Right ventricle myocardium inferior (tissue), 1 donor: ENCODE measurements at regions of chr2 and their contacts with region 1.

Region 1: DNA sequence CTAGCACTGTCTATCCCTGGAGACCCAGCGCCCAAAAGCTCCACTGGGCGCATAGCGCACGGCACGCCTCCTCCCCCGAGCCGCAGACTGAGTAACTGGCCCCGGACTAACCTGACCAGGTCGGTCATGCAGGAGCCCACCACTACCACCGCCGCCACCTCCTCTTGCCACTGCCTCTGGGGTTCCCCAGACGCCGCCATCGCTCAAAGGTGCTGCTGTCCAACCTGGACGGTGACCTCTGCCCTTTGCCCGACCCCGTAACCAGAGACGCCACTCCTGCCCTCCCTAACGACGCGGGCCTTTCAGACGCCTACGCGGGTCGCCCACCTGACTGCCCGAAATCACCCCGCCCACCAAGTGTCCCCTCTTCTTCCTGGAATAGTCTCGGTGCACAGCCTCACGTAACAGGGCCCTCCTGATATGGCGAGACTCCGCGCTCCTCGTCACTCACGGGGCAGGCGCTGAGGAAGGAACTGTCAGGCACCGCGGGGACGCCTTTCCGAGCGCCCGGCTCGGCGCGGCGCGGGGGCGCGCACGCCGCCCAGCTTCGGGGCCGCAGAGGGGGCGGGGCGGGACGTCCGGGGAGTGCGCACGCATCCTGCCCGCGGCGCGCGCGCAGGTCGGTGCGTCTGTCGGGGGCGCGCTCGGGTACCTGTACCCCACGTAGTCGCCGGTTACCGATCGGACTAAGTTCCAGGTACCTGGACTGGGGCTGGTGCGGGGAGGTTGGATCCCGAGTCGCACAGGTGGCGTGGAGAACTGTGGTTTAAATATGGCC is at the starts of genes BABAM2 and RBKS:
- DNase-seq: peak; percentile 92
- ATAC-seq: peak; percentile 97
- total RNA-seq, gene BABAM2: 53.0 TPM
- total RNA-seq, gene RBKS: 4.0 TPM

Region 2: DNA sequence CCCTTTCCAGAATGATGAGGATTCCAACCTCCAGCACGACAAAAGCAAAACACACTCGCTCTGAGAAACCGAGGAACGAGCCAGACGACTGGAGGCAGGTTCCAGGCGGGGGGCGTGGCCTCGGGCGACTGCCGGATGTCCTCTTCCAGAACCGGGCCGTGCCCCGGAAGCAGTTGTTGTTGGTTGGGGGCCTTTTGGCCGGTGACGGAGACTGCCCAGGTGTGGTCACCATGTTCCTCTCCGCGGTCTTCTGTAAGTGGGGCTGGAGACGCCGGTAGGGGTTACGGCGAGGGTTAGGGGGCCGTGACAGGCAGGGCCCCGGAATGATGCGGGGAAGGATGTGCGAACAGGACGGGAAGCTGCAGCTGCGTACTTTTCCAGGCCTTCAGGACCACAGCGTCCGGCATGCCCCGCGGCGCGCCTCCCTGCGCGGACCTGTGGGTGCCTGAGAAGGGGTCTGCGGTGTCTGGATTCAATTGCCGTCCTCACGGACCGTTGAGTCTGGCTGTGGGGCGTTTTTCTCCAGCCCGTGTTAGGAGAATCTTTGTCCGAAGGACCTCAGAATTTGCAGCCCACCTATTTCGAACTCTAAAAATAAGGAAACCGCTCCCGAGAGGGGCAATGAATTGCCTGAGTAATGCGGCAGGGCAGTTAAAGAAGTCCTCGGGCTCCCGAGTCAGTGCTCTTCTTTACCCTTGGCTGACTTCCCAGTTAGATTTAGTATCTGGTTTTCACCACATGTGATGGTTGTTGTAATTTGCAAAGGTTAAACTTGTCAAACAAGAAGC is 118.6 kb before region 1 on chr2 and contains the start of gene MRPL33:
- intact Hi-C with region 1: loop called (anchors 5 kb)
- DNase-seq: peak; percentile 97
- ATAC-seq: peak; percentile 97
- total RNA-seq, gene MRPL33: 360 TPM

Region 3: GRCh38 chr2:27954771-27955383 is 64.5 kb after region 1 on chr2:
- intact Hi-C with region 1: loop called (anchors 5 kb)
- DNase-seq: no peak
- ATAC-seq: peak; percentile 86

Region 4: DNA sequence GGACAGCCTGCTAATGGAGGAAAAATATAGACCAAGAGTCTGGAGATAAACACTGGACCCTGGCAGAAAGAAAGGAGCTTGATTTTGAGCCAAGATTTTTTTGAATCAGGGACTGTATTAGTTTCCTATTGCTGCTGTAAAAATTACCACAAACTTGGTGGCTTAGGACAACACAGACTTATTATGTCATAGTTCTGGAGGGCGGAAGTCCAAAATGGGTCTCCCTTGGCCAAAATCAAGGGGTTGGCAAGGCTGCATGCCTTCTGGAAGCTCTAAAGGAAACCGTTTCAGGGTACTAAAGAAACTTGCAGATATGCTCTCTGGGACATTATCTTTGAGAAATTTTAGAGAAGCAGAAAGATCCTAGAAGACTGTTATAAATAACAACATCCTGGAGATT is 140.3 kb after region 1 on chr2:
- intact Hi-C with region 1: loop called (anchors 10 kb)
- DNase-seq: no peak
- ATAC-seq: peak; percentile 71